Posterior vena cava (tissue), 2 donors: ENCODE measurements at regions of chr11 and their contacts with region 1.

Region 1: DNA sequence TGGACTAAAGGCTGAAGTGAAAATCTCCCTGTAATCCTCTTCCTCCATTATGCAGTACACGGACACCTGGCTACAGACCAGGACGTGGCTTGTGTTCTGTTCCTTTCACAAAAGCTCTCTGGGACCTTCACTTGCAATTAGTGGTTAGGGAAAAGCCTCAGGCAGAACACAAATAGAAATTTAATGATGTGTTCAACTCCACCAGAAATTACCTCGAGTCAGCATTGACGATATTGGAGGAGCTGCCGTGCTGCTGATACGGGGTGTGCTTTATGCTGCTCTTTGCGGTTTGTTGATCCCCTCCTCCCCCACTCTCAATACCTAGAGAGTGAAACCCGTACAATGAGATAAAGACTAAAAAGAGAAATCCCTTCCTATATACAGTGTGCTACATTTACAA is 48.9 kb downstream of the POLD3 start:
- DNase-seq: no peak

Region 2: GRCh38 chr11:74443071-74443864 is 198.0 kb before region 1 on chr11:
- intact Hi-C with region 1: loop called in 1 of 2 experiments (anchors 2 kb)
- DNase-seq: no peak

Region 3: DNA sequence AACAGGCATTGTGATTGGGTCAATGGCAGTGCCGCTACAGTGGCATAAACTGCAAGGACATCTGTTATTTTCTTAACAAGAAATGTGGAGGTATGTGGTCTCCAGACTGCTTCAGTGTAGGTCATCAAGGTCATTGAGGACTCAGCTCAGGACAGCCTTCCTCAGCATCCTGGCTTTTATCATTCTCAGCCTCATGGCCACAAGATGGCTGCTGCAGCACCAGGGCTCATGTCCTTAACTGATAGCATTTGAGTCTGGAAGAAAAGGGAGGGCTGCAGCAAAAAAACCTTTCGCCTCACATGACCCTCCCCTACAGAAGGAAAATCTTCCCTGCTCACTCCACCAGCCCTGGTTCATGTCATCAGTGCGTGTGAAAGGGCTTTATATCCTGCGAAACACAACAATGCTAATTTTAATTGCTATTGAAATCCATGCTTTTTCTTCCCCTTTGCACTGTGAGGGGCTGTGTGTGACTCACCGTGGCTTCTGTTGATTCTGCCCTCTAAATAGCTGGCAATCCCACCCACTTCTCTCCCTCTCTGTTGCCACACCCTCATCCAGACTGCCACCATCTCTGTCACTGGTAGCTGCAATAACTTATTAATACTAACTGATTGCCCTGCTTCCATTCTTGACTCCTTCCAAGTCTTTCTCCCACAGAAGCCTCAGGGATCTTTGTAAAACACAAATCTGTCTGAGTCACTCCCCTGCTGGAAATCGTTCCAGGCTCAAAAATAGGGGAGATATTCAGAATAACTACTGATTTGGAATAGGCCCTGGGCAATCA is 46.1 kb after region 1 on chr11:
- intact Hi-C with region 1: loop called in 1 of 2 experiments (anchors 5 kb)
- DNase-seq: peak; percentile 38